Mammary epithelial cell (primary cell): ENCODE measurements at regions of chr1 and their contacts with region 1.

Region 1: DNA sequence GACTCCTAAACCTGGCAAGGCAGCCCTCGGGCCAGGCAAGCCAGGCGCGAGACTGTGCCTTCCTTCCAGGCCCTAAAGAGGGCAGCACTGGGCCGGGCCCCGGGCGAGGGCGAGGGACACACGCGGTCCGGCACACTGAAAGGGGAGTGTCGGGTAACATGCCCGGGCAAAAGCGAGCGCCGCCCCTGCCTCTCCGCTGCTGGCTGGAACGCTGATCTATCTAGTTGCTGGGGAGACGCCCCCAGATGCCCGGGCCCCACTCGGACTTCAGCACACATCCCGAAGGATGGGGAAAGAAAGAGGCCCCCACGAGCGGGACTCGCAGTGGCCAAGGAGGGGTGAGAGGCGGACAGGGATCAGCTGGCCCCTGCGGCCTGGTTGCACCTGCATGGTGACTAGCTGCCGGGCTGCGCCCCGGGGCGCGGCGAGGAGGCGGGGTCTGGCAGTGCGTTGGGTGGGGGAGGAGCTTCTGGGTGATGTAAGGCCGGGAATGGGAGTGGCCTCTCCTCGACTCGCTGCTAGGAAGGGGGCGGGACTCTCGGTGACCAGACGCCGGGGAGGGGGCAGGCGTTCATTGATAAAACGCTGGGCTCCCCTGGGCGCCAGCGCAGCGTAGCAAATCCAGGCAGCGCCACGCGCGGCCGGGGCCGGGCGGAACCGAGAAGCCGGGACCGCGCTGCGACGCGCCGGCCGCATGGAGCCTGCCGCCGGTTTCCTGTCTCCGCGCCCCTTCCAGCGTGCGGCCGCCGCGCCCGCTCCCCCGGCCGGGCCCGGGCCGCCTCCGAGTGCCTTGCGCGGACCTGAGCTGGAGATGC is at the start of gene PLK3:
- DNase-seq: peak; percentile 98
- H3K4me3 ChIP-seq: peak within 1 kb of the TSS; percentile 33 to 89 (median 63)
- H3K27ac ChIP-seq: peak within 1 kb of the TSS; percentile 89
- H3K4me1 ChIP-seq: peaks cover 30% of the 10 kb centered on the region
- H3K27me3 ChIP-seq: no peaks in the 10 kb centered on the region
- CTCF ChIP-seq: peak; percentile 89 to 91
- total RNA-seq, gene PLK3: 53.5 to 101 TPM

Region 2: GRCh38 chr1:44747878-44748277 is 52.1 kb before region 1 on chr1:
- CTCF ChIA-PET with region 1: no interaction called
- dilution Hi-C with region 1: no loop called
- in situ Hi-C with region 1: no loop called
- intact Hi-C with region 1: no loop called
- DNase-seq: no peak
- H3K4me3 ChIP-seq: no peak overlapping the region
- H3K27ac ChIP-seq: no peak overlapping the region
- H3K4me1 ChIP-seq: no peaks in the 10 kb centered on the region
- H3K27me3 ChIP-seq: no peaks in the 10 kb centered on the region
- CTCF ChIP-seq: no peak

Region 3: DNA sequence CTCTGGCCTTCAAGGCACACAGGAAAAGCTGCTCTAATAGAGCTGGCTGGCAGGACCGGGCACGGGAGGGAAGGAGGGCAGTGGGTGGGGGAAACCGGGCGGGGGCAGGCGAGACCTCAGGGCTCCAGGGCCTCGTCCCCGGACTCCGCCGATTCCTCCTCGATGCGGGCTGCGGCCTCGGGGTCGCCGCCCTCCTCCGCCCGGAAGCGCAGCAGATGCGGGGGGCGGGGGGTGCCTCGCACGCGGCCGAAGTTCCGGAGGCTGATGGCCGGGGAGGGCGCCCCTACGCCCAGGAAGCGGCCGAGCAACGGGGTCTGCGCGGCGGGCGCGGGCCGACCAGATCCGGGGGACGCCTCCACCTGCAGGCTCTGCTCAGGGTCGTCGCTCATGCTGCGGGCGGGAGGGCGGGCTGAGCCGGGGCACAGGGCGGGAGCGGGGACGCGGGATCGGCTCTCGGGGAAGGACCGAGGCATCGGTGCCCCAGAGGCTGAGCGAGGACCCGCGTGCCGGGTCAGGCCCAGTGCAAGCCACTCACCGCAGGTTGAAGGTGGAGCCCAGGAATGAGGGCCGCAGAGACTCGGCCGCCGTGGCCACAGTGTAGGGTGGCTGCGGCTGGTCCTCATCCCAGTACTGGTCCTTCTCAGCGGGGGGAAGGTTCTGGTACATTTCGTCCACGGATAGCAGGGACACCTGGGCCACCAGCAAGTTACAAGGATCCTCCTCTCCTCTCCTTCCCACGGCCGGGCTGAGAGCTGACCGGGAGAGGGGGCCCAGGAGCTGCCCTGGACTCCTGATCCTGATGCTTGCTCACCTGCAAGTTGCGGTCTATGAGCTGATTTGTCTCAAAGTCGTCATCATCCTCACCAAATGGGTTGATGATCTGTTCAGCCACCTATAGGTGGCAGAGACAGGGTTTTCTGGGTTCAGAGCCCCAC is 15.6 kb before region 1 on chr1:
- CTCF ChIA-PET with region 1: no interaction called
- dilution Hi-C with region 1: no loop called
- in situ Hi-C with region 1: no loop called
- intact Hi-C with region 1: loop called (anchors 2 kb)
- DNase-seq: peak; percentile 49
- H3K4me3 ChIP-seq: peak overlapping the region in 2 of 3 experiments; percentile 23 to 37
- H3K27ac ChIP-seq: no peak overlapping the region
- H3K4me1 ChIP-seq: peaks cover 26% of the 10 kb centered on the region
- H3K27me3 ChIP-seq: no peaks in the 10 kb centered on the region
- CTCF ChIP-seq: peak; percentile 32 to 44